Caco-2 (cell line): ENCODE measurements at regions of chr14 and their contacts with region 1.

Region 1: GRCh38 chr14:35331605-35332516 is 39.7 kb downstream of the PSMA6 start:
- DNase-seq: peak; percentile 82 to 83
- H3K4me3 ChIP-seq: no peak overlapping the region
- H3K4me3 Mint-ChIP-seq: peak overlapping the region; percentile 52
- H3K27ac Mint-ChIP-seq: peak overlapping the region; percentile 90
- H3K4me1 ChIP-seq: peaks cover 45% of the 10 kb centered on the region
- H3K4me1 Mint-ChIP-seq: peaks cover 26% of the 10 kb centered on the region
- H3K27me3 ChIP-seq: no peaks in the 10 kb centered on the region
- H3K27me3 Mint-ChIP-seq: no peaks in the 10 kb centered on the region
- CTCF ChIP-seq: no peak

Region 2: DNA sequence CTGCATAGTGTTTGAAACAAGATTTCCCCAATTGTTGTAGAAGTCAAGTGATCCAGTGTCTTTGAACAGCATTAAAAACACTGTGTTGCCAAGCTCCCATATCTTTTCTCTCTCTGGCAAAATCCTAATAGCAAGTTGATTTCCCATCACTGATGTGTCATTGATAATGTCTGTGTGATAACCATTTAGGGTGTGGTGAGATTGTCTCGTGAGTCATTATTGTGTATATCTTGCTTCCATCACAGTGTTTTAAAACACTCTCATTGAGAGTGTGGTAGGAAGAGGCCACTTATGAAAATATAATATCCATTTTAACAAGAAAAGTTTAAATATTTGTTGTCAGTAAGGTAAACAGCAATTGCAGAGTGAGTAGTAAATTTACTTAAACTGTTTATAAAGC is 134.8 kb before region 1 on chr14:
- CTCF ChIA-PET with region 1: no interaction called
- POLR2A ChIA-PET with region 1: no interaction called
- intact Hi-C with region 1: no loop called
- DNase-seq: no peak
- H3K4me3 ChIP-seq: no peak overlapping the region
- H3K4me3 Mint-ChIP-seq: no peak overlapping the region
- H3K27ac Mint-ChIP-seq: no peak overlapping the region
- H3K4me1 ChIP-seq: no peaks in the 10 kb centered on the region
- H3K4me1 Mint-ChIP-seq: no peaks in the 10 kb centered on the region
- H3K27me3 ChIP-seq: no peaks in the 10 kb centered on the region
- H3K27me3 Mint-ChIP-seq: no peaks in the 10 kb centered on the region
- CTCF ChIP-seq: no peak

Region 3: DNA sequence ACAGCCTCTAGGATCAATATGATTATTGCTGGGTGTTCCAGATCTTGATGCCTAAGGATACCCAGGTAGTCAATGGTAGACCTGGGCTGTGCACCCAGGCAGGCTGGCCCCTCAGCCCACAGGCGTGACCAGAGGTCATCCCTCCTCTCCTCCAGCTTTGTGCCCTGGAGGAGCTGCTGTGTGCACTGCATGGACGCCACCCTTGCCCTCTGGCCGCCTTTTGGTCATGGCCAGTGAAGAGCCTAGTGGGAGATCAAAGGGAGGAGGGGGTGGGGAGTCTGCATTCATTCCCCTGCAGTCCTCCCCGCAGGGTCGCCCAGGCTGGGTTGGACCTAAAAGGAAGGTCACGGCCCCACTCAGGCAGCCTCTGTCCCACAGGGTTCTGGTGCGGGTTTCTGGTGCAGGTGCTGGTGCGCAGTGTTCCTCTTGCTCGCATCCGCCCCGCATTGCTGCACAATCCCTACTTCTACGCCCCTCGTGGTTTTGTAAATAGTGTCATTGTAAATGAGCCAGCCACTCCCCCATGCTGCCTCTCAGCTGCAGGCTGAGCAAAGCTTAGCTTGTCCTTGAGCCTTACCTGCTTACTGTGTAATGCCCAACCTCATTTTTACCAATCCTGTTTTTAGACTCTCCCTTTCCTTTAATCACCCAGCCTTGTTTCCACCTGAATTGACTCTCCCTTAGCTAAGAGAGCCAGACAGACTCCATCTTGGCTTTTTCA is 15.6 kb after region 1 on chr14:
- CTCF ChIA-PET with region 1: interaction called, 3 read pairs
- POLR2A ChIA-PET with region 1: no interaction called
- intact Hi-C with region 1: loop called (anchors 1 kb)
- DNase-seq: peak in 1 of 2 experiments; percentile 39
- H3K4me3 ChIP-seq: no peak overlapping the region
- H3K4me3 Mint-ChIP-seq: peak overlapping the region; percentile 38
- H3K27ac Mint-ChIP-seq: peak overlapping the region; percentile 78
- H3K4me1 ChIP-seq: peaks cover 13% of the 10 kb centered on the region
- H3K4me1 Mint-ChIP-seq: peaks cover 29% of the 10 kb centered on the region
- H3K27me3 ChIP-seq: no peaks in the 10 kb centered on the region
- H3K27me3 Mint-ChIP-seq: no peaks in the 10 kb centered on the region
- CTCF ChIP-seq: no peak